CD4-positive, alpha-beta memory T cell (primary cell): ENCODE measurements at regions of chr5 and their contacts with region 1.

Region 1: DNA sequence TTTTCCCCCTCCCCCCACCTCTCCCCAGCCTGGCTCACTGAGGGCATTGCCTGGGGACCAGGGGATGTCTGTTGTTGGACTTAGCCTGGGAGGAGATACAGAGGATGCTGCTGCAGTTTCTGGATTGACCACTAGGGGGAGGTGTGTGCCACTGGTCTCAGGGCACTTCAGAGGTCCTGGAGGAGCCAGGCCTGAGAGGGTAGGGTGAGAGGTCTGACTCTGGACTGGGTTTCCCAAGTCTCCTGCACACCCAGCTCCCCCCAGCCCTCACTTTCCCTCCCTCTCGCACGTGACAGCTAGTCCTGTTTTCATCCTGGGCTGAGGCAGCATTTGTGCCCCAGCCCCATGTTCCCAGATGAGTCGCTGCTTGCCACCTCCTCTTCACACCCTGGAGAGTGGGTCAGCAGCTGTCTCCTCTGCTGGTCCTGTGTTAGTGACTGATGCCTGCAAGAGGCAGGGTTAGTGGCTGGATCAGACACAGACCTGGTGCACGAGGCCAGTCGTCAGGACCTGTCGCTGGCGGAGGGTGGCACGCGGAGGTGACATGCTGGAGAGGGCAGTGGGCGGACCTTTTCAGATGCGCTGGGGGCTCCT is 4.4 kb downstream of the IL3 start:
- DNase-seq: peak; percentile 59 to 71 (median 67)
- H3K4me3 ChIP-seq: no peak overlapping the region
- H3K4me3 Mint-ChIP-seq: no peak overlapping the region
- H3K27ac ChIP-seq: no peak overlapping the region
- H3K27ac Mint-ChIP-seq: peak overlapping the region in 5 of 7 donors; percentile 7 to 84 (median 47)
- H3K4me1 ChIP-seq: peaks cover 22% of the 10 kb centered on the region
- H3K4me1 Mint-ChIP-seq: peaks cover 14 to 54% (median 33%) of the 10 kb centered on the region in 4 donors
- H3K27me3 ChIP-seq: no peaks in the 10 kb centered on the region
- H3K27me3 Mint-ChIP-seq: no peaks in the 10 kb centered on the region

Region 2: GRCh38 chr5:131589510-131590348 is 475.1 kb before region 1 on chr5:
- CTCF ChIA-PET with region 1: interaction called, 97 read pairs
- POLR2A ChIA-PET with region 1: interaction called, 4 read pairs
- intact Hi-C with region 1: loop called (anchors 1 kb)
- DNase-seq: peak in 4 of 5 donors; percentile 56 to 60 (median 58)
- H3K4me3 ChIP-seq: no peak overlapping the region
- H3K4me3 Mint-ChIP-seq: no peak overlapping the region
- H3K27ac ChIP-seq: no peak overlapping the region
- H3K27ac Mint-ChIP-seq: peak overlapping the region in 4 of 7 donors; percentile 22 to 77 (median 52)
- H3K4me1 ChIP-seq: peaks cover 17% of the 10 kb centered on the region
- H3K4me1 Mint-ChIP-seq: peaks cover 21 to 58% (median 32%) of the 10 kb centered on the region in 4 donors
- H3K27me3 ChIP-seq: no peaks in the 10 kb centered on the region
- H3K27me3 Mint-ChIP-seq: no peaks in the 10 kb centered on the region

Region 3: DNA sequence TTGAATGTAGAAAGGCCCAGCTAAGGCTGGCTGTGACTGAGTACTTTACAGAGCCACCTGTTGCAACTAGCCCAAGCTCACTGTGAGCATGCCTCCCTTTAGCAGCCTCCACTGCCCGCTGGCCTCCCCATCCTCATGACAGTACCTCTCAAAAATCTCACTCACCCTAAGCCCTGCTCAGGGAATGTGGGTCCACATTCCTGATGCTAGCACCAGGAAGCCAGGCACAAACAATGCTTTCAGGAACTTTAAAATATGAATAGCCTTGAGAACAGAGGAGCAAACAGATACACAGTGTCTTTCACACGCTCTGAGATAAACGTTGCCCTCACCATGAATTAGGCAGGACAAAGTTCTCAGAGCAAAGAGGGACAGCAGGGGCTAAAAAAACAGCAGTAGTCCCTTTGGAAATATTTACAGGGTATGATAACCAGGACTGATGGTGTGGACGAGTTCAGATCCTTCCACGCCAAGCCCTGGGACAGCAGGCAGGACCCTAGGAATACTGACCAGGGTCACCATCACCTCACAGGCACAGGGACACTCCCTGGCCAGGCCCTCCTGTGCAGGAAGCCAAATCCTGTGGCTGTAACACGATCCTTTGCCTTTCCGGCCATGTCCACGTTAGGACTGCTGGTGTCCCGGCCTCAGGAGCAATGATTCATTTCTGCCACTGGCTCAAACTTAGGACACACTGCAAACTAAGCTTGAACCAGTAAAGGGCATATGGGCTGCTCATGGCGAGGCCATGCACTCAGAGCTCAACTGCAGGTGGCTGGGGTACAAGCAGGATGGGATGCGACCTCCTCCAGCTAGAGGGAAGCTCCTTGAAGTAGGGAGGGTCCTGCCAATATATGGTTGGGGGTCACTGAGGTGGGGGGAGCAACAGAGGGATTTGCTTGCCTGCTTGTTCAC is 62.9 kb before region 1 on chr5:
- CTCF ChIA-PET with region 1: interaction called, 71 read pairs
- POLR2A ChIA-PET with region 1: no interaction called
- intact Hi-C with region 1: no loop called
- DNase-seq: no peak
- H3K4me3 ChIP-seq: no peak overlapping the region
- H3K4me3 Mint-ChIP-seq: peak overlapping the region in 6 of 8 donors; percentile 26 to 83 (median 52)
- H3K27ac ChIP-seq: no peak overlapping the region
- H3K27ac Mint-ChIP-seq: peak overlapping the region in 6 of 7 donors; percentile 18 to 80 (median 62)
- H3K4me1 ChIP-seq: peaks cover 66% of the 10 kb centered on the region
- H3K4me1 Mint-ChIP-seq: peaks cover 44 to 68% (median 58%) of the 10 kb centered on the region in 4 donors
- H3K27me3 ChIP-seq: no peaks in the 10 kb centered on the region
- H3K27me3 Mint-ChIP-seq: no peaks in the 10 kb centered on the region

Region 4: GRCh38 chr5:132114150-132115121 is 49.6 kb after region 1 on chr5:
- CTCF ChIA-PET with region 1: interaction called, 11 read pairs
- POLR2A ChIA-PET with region 1: no interaction called
- intact Hi-C with region 1: no loop called
- DNase-seq: no peak
- H3K4me3 ChIP-seq: no peak overlapping the region
- H3K4me3 Mint-ChIP-seq: peak overlapping the region in 5 of 8 donors; percentile 12 to 62 (median 37)
- H3K27ac ChIP-seq: no peak overlapping the region
- H3K27ac Mint-ChIP-seq: peak overlapping the region in 4 of 7 donors; percentile 6 to 77 (median 70)
- H3K4me1 ChIP-seq: peaks cover 77% of the 10 kb centered on the region
- H3K4me1 Mint-ChIP-seq: peaks cover 50 to 71% (median 57%) of the 10 kb centered on the region in 4 donors
- H3K27me3 ChIP-seq: no peaks in the 10 kb centered on the region
- H3K27me3 Mint-ChIP-seq: no peaks in the 10 kb centered on the region

Region 5: DNA sequence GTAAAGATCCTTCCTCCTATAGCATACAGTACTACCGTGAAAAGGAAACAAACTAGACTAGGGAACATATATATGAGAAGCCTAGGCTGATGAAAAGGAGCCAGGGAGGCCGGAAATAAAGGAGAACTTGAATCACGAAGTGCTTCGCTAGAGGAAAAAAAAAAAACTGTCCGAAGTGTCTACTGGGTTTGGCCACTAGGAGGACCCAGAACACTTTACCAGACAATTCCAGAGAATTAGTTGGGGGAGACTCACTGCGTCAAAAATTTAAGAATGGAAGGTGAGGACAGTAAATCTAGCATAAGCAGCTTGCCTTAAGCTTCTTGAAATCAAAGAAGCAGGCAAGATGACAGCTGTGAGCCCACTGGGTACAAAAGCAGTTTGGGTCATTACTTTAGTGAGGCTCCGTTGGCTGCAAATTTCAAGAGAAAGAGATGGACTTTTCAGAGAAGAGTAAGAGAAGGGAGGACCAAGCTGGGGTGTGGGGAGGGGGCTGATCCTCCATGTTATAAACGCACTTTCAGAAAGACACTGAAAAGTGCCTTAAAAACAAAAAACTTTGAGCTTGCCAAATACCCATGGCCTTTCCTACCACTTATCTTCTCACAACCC is 115.4 kb after region 1 on chr5:
- CTCF ChIA-PET with region 1: interaction called, 12 read pairs
- POLR2A ChIA-PET with region 1: no interaction called
- intact Hi-C with region 1: loop called (anchors 2 kb)
- DNase-seq: peak in 4 of 5 donors; percentile 9 to 15 (median 12)
- H3K4me3 ChIP-seq: no peak overlapping the region
- H3K4me3 Mint-ChIP-seq: peak overlapping the region in 1 of 8 donors; percentile 50
- H3K27ac ChIP-seq: no peak overlapping the region
- H3K27ac Mint-ChIP-seq: no peak overlapping the region
- H3K4me1 ChIP-seq: peaks cover 11% of the 10 kb centered on the region
- H3K4me1 Mint-ChIP-seq: peaks cover 18 to 30% (median 24%) of the 10 kb centered on the region in 4 donors
- H3K27me3 ChIP-seq: no peaks in the 10 kb centered on the region
- H3K27me3 Mint-ChIP-seq: no peaks in the 10 kb centered on the region

Region 6: GRCh38 chr5:132272311-132273210 is 207.7 kb after region 1 on chr5:
- CTCF ChIA-PET with region 1: no interaction called
- POLR2A ChIA-PET with region 1: no interaction called
- intact Hi-C with region 1: loop called (anchors 2 kb)
- DNase-seq: peak; percentile 32 to 54 (median 47)
- H3K4me3 ChIP-seq: no peak overlapping the region
- H3K4me3 Mint-ChIP-seq: peak overlapping the region in 4 of 8 donors; percentile 6 to 61 (median 41)
- H3K27ac ChIP-seq: no peak overlapping the region
- H3K27ac Mint-ChIP-seq: peak overlapping the region in 1 of 7 donors; percentile 12
- H3K4me1 ChIP-seq: no peaks in the 10 kb centered on the region
- H3K4me1 Mint-ChIP-seq: peaks cover 0 to 22% (median 12%) of the 10 kb centered on the region in 4 donors
- H3K27me3 ChIP-seq: no peaks in the 10 kb centered on the region
- H3K27me3 Mint-ChIP-seq: peaks cover 6 to 16% of the 10 kb centered on the region in 2 donors